Gastrocnemius medialis (tissue), 4 donors: ENCODE measurements at regions of chr2 and their contacts with region 1.

Region 1: GRCh38 chr2:55718165-55719008 is 24.7 kb upstream of the PNPT1 start:
- DNase-seq: no peak
- ATAC-seq: no peak
- H3K4me3 ChIP-seq: no peak overlapping the region
- H3K27ac ChIP-seq: no peak overlapping the region
- H3K4me1 ChIP-seq: no peaks in the 10 kb centered on the region
- H3K27me3 ChIP-seq: no peaks in the 10 kb centered on the region
- CTCF ChIP-seq: peak; percentile 42 to 80 (median 46)
- POLR2A ChIP-seq: no peak

Region 2: DNA sequence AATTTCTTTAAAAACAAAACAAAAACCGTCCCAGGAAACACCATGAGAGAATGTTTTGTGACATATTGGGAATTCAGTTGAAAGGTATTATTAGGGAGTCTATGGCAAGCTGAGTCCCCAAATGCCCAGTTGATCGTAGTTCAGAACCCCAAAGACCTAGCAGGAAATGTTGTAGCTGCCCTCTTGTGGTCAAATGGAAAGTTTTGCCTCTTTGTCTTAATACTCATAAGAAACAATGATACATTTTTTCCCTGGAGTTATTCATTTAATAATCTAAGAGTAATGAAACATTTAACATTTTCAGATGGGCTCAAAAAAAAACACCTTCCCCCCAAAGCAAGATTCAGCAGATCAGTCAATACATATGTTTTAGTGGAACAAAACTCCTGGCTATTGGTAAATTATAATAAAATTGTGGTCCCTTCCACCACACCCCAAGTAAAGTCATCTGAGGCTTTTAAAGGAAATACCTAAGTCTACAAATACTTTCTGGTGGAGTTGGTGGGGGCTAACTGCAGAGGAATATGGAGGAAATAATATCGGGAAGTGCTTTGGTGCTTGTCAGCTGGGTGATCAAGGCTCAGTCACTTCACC is 243.0 kb after region 1 on chr2:
- in situ Hi-C with region 1: no loop called
- intact Hi-C with region 1: loop called (anchors 2 kb)
- DNase-seq: no peak
- ATAC-seq: no peak
- H3K4me3 ChIP-seq: no peak overlapping the region
- H3K27ac ChIP-seq: no peak overlapping the region
- H3K4me1 ChIP-seq: no peaks in the 10 kb centered on the region
- H3K27me3 ChIP-seq: no peaks in the 10 kb centered on the region
- CTCF ChIP-seq: peak in 3 of 5 experiments; percentile 17 to 51 (median 33)
- POLR2A ChIP-seq: no peak

Region 3: GRCh38 chr2:56009758-56010458 is 291.5 kb after region 1 on chr2:
- in situ Hi-C with region 1: loop called in 2 of 4 experiments (anchors 10 kb)
- intact Hi-C with region 1: loop called (anchors 5 kb)
- DNase-seq: no peak
- ATAC-seq: no peak
- H3K4me3 ChIP-seq: no peak overlapping the region
- H3K27ac ChIP-seq: no peak overlapping the region
- H3K4me1 ChIP-seq: no peaks in the 10 kb centered on the region
- H3K27me3 ChIP-seq: no peaks in the 10 kb centered on the region
- CTCF ChIP-seq: peak in 3 of 5 experiments; percentile 13 to 23 (median 13)
- POLR2A ChIP-seq: no peak

Region 4: DNA sequence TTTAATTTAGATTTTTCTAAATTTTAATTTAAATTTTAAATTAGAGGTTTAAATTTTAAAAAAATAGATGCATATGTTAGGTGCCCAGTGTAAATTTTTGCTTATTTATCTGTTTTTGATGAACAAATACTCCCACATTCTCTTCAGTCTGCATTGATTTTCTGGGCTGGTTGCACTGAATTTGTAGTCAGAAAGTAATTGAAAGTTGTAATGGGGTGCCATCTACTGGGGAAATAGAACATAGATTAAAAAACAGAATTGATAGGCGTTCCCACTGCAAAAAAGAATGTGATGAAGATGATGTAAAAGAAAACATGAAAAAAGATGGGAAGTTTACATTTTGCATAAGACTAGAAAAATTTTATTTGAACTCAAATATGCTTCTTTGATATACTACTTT is 413.8 kb after region 1 on chr2:
- in situ Hi-C with region 1: loop called in 3 of 4 experiments (anchors 10 to 25 kb)
- intact Hi-C with region 1: loop called (anchors 5 kb)
- DNase-seq: no peak
- ATAC-seq: no peak
- H3K4me3 ChIP-seq: no peak overlapping the region
- H3K27ac ChIP-seq: no peak overlapping the region
- H3K4me1 ChIP-seq: no peaks in the 10 kb centered on the region
- H3K27me3 ChIP-seq: no peaks in the 10 kb centered on the region
- CTCF ChIP-seq: peak in 2 of 5 experiments; percentile 14 to 39
- POLR2A ChIP-seq: no peak

Region 5: DNA sequence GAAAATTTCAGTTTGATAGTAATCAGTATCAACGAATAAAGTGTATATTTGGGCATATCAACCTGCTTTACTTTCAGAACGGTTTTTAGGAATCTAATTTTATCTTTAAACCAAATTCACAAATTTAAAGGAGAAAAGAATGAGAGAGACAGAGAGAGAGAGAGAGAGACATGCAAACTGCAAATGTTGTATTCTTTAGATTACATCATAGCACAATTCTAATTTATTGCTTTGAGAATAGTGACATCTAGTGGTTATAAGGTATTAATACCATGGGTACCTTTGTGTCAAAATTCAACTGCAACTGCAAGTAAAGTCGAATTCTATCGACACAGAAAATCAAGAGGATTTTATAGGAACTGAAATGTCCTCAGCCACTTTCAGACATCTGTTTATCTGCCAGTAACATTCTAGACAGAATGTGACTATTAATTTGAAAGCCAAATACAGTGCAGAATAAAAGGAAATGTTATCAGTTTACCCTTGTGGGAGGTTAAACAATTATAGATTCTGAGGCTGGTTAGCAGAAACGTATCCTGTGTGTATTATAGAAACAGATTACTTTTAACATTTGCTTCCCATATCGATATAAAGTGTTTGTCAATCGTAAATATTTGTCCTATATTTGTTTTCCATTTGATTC is 1798.4 kb after region 1 on chr2:
- in situ Hi-C with region 1: loop called in 1 of 4 experiments (anchors 25 kb)
- intact Hi-C with region 1: no loop called
- DNase-seq: no peak
- ATAC-seq: peak in 1 of 2 donors; percentile 73
- H3K4me3 ChIP-seq: no peak overlapping the region
- H3K27ac ChIP-seq: no peak overlapping the region
- H3K4me1 ChIP-seq: no peaks in the 10 kb centered on the region
- H3K27me3 ChIP-seq: no peaks in the 10 kb centered on the region
- CTCF ChIP-seq: peak in 4 of 5 experiments; percentile 52 to 59 (median 55)
- POLR2A ChIP-seq: no peak